ENCODE measurements at regions of chr22 and their contacts with region 1.

Region 1: DNA sequence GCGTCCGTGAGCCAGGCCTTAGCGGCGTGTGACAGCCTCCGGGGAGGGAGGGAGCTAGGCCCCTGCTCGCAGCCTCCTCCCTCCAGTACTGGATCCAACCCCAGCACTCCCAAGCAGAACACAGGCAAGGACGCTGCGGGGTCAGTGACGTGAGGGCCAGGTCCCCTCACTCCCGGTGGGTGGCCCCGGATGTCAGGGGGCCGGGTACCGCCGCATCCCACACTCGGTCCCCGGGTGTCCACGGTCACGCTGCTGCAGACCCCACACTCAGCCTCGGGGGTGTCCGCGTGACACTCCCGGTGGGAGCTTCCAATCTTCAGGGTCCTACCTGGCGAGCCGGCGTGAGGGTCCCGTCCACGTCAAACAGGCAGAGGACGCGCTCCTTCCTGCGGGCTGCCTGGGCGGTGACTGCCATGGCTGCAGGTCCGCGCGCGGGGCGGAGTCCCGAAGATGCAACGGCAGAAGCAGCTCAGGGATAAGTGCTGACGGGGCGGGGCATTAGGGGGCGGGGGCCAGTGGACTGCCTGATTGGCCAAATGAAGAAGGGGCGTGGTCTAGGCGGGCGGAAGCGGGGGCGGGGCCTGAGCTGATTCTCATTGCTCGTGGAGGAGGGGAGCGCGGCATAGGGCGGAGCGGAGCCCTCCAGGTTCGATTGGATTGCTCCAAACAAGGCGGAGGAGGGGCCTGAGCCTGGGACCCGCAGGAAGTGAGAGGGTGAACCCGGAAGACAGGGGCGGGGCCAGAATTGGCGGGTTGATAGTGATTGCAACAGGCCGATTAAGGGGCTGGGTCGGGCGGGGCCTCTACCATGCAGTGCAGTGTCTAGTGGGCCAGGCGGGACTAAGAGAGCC is at the start of gene PMM1:
- DNase-seq: peak; percentile 98
- ATAC-seq: peak; percentile 85
- H3K4me3 ChIP-seq: peak within 1 kb of the TSS; percentile 77 to 99 (median 95)
- H3K27ac ChIP-seq: peak within 1 kb of the TSS; percentile 78
- H3K4me1 ChIP-seq: peaks cover 25% of the 10 kb centered on the region
- H3K27me3 ChIP-seq: no peaks in the 10 kb centered on the region
- CTCF ChIP-seq: peak; percentile 18; the same call in 1 of the 2 replicates
- EP300 ChIP-seq: no peak
- POLR2A ChIP-seq: peak; percentile 86 to 94
- RAD21 ChIP-seq: no peak; the same call in 1 of the 2 replicates
- total RNA-seq, gene PMM1: 17.8 and 23.0 TPM in 2 replicates

Region 2: GRCh38 chr22:41551877-41552582 is 37.6 kb before region 1 on chr22:
- CTCF ChIA-PET with region 1: no interaction called
- POLR2A ChIA-PET with region 1: interaction called, 35 read pairs
- in situ Hi-C with region 1: no loop called
- intact Hi-C with region 1: loop called (anchors 2 kb)
- DNase-seq: no peak
- ATAC-seq: no peak
- H3K4me3 ChIP-seq: peak overlapping the region; percentile 2 to 47 (median 14); a peak in 5 of 6 replicates
- H3K27ac ChIP-seq: peak overlapping the region; percentile 9
- H3K4me1 ChIP-seq: peaks cover 85% of the 10 kb centered on the region
- H3K27me3 ChIP-seq: no peaks in the 10 kb centered on the region; a peak in 2 of 5 replicates
- CTCF ChIP-seq: no peak
- EP300 ChIP-seq: no peak
- POLR2A ChIP-seq: no peak
- RAD21 ChIP-seq: no peak

Region 3: DNA sequence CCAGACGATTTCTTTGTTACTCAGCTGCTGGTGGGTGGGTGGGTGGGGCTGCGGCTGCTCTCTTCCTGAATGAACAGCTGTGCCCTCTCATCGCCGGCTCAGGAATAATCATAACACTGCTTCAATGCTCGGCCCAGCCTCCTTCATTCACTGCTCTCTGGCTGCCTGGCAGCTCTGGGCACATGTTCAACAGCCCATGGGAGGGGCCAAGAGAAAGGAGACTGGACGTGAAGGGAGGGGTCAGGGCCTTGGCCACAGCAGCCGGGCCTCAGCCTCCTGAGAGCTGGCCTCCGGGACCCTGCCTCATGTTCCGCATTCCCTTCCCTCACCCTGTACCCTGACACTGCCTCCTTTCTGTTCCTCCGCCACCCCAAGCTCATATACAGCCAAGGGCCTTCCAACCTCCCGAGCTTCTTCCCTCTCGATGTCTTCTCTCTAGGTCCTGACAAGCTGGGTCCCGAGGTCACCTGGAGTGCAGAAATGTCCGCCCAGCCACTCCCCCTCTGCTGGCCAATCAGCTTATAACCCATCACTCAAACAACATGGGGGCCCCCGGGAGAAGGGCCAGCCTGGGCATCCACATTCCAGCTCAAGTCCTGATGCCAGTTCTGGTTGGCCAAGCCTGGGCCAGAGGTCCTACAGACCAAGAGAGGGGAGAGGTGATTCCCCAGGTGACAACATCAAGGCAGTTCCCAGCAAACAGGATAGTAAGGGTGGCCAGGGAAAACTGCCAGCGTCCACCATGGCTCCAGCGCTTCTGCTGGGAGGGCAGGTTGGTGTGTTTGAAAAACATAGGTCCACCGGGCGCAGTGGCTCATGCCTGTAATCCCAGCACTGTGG is 32.0 kb before region 1 on chr22:
- CTCF ChIA-PET with region 1: no interaction called
- POLR2A ChIA-PET with region 1: interaction called, 24 read pairs
- in situ Hi-C with region 1: no loop called
- intact Hi-C with region 1: no loop called
- DNase-seq: peak; percentile 70
- ATAC-seq: peak; percentile 46
- H3K4me3 ChIP-seq: peak overlapping the region; percentile 27 to 72 (median 56); a peak in 5 of 6 replicates
- H3K27ac ChIP-seq: peak overlapping the region; percentile 8
- H3K4me1 ChIP-seq: peaks cover 89% of the 10 kb centered on the region
- H3K27me3 ChIP-seq: peaks cover 0 to 25% of the 10 kb centered on the region in 2 experiments; a peak in 4 of 5 replicates
- CTCF ChIP-seq: 0 out of 2 replicates have a peak, but pooled peaks have one; percentile 10
- EP300 ChIP-seq: 0 out of 4 replicates have a peak, but pooled peaks of 1 of the 2 experiments have one; percentile 26
- POLR2A ChIP-seq: 0 out of 4 replicates have a peak, but pooled peaks of 1 of the 2 experiments have one; percentile 25
- RAD21 ChIP-seq: no peak

Region 4: DNA sequence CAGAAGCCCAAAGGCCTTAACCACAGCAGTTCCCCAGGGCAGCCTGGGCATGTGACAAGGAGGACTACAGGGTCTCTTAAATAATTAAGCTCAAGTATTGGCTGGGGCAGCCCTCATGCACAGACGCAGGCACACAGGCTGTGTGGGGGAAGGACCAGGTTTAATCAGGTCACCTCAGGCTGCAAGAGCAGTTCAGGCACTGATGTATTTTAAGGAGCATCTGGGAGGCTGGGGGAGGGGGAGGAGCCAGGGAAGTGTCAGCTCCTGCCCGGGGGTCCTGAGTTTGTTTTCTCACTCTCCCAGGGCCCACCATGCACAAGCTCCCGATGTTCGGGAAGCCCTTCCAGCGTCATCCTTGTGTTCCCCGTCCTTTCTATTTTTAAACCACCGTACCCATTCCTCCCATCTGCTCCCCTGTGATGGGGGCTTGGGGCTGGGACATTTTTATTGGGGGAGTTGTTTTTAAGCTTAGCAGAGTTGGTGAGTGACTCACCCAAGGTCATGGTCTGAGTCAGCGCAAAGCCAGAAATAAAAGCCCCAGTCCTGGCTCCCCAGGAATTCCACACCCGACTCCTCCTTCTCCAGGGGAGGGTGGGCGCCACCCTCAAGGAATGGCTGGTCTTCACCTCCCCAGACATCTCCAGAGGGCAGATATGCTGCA is 26.4 kb before region 1 on chr22:
- CTCF ChIA-PET with region 1: no interaction called
- POLR2A ChIA-PET with region 1: interaction called, 24 read pairs
- in situ Hi-C with region 1: no loop called
- intact Hi-C with region 1: no loop called
- DNase-seq: peak; percentile 43
- ATAC-seq: no peak
- H3K4me3 ChIP-seq: no peak overlapping the region
- H3K27ac ChIP-seq: no peak overlapping the region
- H3K4me1 ChIP-seq: peaks cover 71% of the 10 kb centered on the region
- H3K27me3 ChIP-seq: peaks cover 0 to 29% of the 10 kb centered on the region in 2 experiments; a peak in 3 of 5 replicates
- CTCF ChIP-seq: no peak
- EP300 ChIP-seq: no peak
- POLR2A ChIP-seq: no peak
- RAD21 ChIP-seq: no peak

Region 5: GRCh38 chr22:41576877-41577276 is 12.7 kb before region 1 on chr22:
- CTCF ChIA-PET with region 1: interaction called, 77 read pairs
- POLR2A ChIA-PET with region 1: interaction called, 29 read pairs
- in situ Hi-C with region 1: no loop called
- intact Hi-C with region 1: no loop called
- DNase-seq: peak; percentile 82
- ATAC-seq: peak; percentile 91
- H3K4me3 ChIP-seq: no peak overlapping the region
- H3K27ac ChIP-seq: no peak overlapping the region
- H3K4me1 ChIP-seq: peaks cover 28% of the 10 kb centered on the region
- H3K27me3 ChIP-seq: no peaks in the 10 kb centered on the region
- CTCF ChIP-seq: peak; percentile 95
- EP300 ChIP-seq: no peak
- POLR2A ChIP-seq: 0 out of 4 replicates have a peak, but pooled peaks of 1 of the 2 experiments have one; percentile 17
- RAD21 ChIP-seq: peak; percentile 98

Region 6: GRCh38 chr22:41621099-41621910 is 31.7 kb after region 1 on chr22 and contains the start of gene XRCC6:
- CTCF ChIA-PET with region 1: no interaction called
- POLR2A ChIA-PET with region 1: interaction called, 78 read pairs
- in situ Hi-C with region 1: no loop called
- intact Hi-C with region 1: no loop called
- DNase-seq: peak; percentile 98
- ATAC-seq: peak; percentile 80
- H3K4me3 ChIP-seq: peak within 1 kb of the TSS; percentile 82 to 94 (median 85)
- H3K27ac ChIP-seq: peak within 1 kb of the TSS; percentile 97
- H3K4me1 ChIP-seq: peaks cover 67% of the 10 kb centered on the region
- H3K27me3 ChIP-seq: no peaks in the 10 kb centered on the region; a peak in 1 of 5 replicates
- CTCF ChIP-seq: peak; percentile 22; the same call in 1 of the 2 replicates
- EP300 ChIP-seq: no peak
- POLR2A ChIP-seq: peak; percentile 88 to 93
- RAD21 ChIP-seq: 0 out of 2 replicates have a peak, but pooled peaks have one; percentile 15
- total RNA-seq, gene XRCC6: 625 and 944 TPM in 2 replicates

Region 7: DNA sequence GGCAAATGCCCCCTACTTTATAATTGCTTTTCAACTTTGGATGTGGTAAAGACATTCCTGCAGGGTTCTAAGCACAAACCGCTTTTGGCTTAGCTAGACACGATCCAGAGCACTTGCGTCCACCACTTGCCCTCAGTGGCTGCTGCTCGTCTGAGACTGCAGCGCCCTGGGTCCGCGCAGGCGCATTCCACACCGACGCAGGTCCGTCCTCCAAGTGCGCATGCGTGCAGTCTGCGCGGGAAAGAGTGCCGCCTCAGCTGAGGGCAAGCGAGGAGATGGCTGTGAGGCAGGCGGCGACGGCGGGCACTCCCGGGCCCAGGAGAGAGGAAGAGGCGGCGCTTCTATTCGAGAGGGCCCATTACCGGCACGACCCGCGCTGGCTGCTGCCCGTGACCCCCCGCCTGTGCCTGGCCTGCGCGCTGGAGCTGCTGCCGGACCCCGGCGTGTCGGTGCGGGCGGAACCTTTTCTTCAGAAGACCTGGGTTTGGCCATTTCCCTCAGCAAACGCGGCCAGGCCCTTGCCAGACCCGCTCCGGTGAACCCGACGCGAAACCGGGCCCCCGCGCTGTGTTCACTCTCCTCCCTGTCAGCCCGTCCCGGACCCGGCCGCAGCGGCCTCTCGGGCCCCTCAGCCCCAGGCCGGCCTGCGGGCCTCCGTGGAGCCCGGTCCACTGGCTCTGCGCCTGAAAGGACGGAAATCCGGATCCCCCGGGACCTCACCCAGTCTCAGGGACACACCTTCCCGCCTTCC is 109.8 kb after region 1 on chr22 and contains the start of gene MEI1:
- CTCF ChIA-PET with region 1: no interaction called
- POLR2A ChIA-PET with region 1: no interaction called
- in situ Hi-C with region 1: no loop called
- intact Hi-C with region 1: no loop called
- DNase-seq: no peak
- ATAC-seq: no peak
- H3K4me3 ChIP-seq: no peak within 1 kb of the TSS
- H3K27ac ChIP-seq: no peak within 1 kb of the TSS
- H3K4me1 ChIP-seq: peaks cover 16% of the 10 kb centered on the region
- H3K27me3 ChIP-seq: no peaks in the 10 kb centered on the region
- CTCF ChIP-seq: no peak
- EP300 ChIP-seq: no peak
- POLR2A ChIP-seq: no peak
- RAD21 ChIP-seq: no peak
- total RNA-seq, gene MEI1: 0.53 and 0.75 TPM in 2 replicates

Measured in HepG2 (cell line).